Activated CD4-positive, alpha-beta memory T cell treated with anti-CD3 and anti-CD28 coated beads for 36 hours (primary cell): ENCODE measurements at regions of chr2 and their contacts with region 1.

Region 1: DNA sequence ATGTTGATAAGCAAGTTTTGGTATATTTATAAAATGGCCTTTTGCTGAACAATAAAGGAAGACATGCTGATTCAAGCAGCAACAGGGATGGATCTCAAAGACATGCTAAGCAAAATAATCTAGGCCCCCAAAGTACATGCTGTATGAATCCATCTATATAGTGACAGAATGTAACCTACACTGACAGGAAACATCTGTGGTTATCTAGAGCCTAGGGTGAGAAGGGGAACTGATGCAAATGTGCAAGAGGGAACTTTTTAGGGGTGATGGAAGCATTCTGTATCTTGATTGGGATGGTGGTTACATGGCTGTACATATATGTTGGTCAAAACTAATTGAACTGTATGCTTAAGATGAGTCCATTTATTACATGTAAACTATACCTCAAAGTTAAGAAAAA is 24.2 kb downstream of the CNRIP1 start:
- DNase-seq: no peak
- H3K4me3 Mint-ChIP-seq: no peak overlapping the region
- H3K27ac Mint-ChIP-seq: no peak overlapping the region
- H3K4me1 Mint-ChIP-seq: no peaks in the 10 kb centered on the region
- H3K27me3 Mint-ChIP-seq: no peaks in the 10 kb centered on the region

Region 2: DNA sequence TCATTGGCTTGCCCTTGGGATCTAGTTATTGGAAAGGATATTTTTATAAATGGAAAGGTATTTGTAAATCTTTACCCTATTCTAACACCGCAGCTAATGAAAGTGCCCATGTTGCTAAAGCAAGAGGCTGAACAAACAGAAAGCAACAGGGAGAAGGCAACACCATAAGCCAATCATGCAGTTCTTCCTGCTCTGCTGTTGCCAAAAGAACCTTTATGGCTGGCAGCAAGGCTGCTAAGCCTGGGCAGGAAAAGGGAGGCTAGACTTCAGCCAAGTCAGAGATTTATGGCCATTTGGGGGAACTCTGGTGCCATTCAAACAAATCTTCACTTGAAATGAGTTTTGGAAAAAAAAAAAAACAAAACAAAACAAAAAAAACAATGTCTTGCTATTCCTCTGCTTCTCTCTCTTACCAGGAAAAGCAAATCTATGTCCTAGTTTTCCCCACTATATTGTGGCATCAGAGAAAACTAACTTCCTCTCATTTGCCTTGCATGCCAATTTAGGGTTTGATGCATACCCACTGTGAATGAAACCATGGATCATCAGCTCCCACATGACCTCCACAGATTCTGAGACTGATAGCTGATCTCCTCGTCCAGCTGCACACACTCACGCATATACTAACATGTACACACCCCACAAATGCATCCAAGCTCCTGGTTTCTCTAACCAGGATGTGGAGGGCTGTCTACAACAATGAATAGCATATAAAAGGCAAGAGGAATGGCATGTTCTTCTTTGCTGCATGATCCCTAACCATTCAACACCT is 412.0 kb before region 1 on chr2:
- CTCF ChIA-PET with region 1: no interaction called
- POLR2A ChIA-PET with region 1: no interaction called
- intact Hi-C with region 1: no loop called
- DNase-seq: no peak
- H3K4me3 Mint-ChIP-seq: no peak overlapping the region
- H3K27ac Mint-ChIP-seq: no peak overlapping the region
- H3K4me1 Mint-ChIP-seq: no peaks in the 10 kb centered on the region
- H3K27me3 Mint-ChIP-seq: no peaks in the 10 kb centered on the region

Region 3: GRCh38 chr2:68214381-68214780 is 81.1 kb before region 1 on chr2:
- CTCF ChIA-PET with region 1: no interaction called
- POLR2A ChIA-PET with region 1: no interaction called
- intact Hi-C with region 1: no loop called
- DNase-seq: no peak
- H3K4me3 Mint-ChIP-seq: no peak overlapping the region
- H3K27ac Mint-ChIP-seq: no peak overlapping the region
- H3K4me1 Mint-ChIP-seq: peaks cover 61% of the 10 kb centered on the region
- H3K27me3 Mint-ChIP-seq: no peaks in the 10 kb centered on the region

Region 4: DNA sequence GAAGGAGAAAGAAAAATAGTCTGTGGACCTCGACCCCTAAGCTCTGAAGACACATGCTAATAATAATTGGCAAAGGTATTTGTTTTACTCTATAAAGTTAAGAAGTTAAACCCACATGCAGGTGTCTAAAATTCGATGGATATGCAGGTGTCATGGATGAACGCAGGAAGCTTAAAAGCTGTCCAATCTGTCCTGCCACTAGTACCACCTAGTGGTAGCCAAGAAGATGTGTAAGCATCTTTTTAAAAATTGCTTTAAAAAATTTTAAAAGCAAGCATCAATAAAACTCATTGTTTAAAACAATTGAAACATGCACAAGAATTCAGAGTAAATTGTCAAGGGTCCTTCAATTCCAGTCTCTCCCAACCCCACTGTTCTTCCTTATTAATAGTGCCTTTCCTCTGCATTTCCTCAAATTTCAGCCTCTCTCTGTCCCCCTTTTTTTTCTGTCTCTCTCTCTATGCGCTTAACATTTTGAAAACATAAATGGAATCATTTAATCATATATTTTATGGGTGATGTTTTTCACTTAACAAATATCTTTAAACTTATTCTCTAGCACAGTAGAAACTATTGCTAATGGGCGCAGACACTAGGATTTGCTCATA is 12.6 kb before region 1 on chr2:
- CTCF ChIA-PET with region 1: interaction called, 17 read pairs
- POLR2A ChIA-PET with region 1: no interaction called
- intact Hi-C with region 1: no loop called
- DNase-seq: no peak
- H3K4me3 Mint-ChIP-seq: no peak overlapping the region
- H3K27ac Mint-ChIP-seq: no peak overlapping the region
- H3K4me1 Mint-ChIP-seq: no peaks in the 10 kb centered on the region
- H3K27me3 Mint-ChIP-seq: peaks cover 7% of the 10 kb centered on the region

Region 5: DNA sequence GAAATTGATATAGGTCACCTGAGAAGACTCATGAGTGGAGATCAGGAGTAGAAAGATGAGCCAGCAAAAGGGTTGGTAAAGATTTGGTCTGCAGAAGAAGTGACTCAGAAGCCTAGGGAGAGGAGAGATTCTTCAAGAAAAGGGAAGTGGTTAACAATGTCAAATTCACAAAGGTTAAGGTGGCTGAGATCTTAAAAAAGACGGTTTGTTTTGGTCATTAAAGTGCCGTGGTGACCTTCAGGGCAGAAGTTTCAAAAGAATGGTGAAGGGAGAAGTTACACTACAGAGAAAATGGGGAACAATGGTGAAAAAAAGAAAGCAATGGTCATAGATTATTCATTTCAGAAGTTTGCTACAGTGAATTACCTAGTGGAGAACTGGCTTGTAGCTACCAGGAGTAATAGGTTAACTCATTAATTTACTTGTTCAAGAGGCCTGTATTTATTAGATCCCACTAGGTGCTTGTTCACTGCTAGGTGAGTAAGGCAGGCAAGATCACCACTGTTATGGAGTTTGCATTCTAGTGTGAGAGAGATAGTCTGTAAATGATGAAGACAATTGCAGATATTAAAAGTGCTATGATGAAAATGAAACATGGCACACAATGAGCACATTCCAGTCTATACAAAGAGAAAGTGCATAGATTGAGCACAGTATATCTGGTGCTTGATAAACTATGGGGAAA is 128.6 kb after region 1 on chr2:
- CTCF ChIA-PET with region 1: no interaction called
- POLR2A ChIA-PET with region 1: no interaction called
- intact Hi-C with region 1: no loop called
- DNase-seq: no peak
- H3K4me3 Mint-ChIP-seq: no peak overlapping the region
- H3K27ac Mint-ChIP-seq: no peak overlapping the region
- H3K4me1 Mint-ChIP-seq: peaks cover 18% of the 10 kb centered on the region
- H3K27me3 Mint-ChIP-seq: no peaks in the 10 kb centered on the region